ENCODE measurements at regions of chr3 and their contacts with region 1.

Region 1: DNA sequence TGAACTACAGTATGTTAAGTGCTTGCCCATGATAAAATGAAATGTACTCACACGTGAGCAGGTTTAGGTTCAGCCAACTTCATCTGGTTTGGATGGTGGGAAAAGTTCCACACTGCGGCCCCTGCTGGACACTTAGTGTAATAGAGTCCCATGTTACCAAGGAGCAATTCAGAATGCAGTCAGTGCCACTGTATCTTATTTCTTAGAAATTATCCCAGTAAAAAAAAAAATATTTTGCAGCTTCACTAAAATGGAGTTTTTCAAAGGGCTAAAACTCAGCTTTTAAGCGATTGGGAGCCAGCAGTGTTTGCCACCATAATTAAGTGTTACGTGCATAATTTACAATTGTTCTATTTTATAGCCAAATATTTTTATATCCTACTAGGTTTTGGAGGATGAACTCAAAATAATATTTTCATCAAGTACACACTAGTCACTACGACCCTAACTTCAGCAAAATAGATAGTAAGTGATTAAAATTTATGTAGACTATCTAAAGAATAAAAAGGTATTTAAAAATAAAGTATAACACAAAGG is 371.7 kb upstream of the GBE1 start:
- DNase-seq: peak in 4 of 5 donors; percentile 20 to 26 (median 24)
- H3K4me3 ChIP-seq: no peak overlapping the region
- H3K4me3 Mint-ChIP-seq: no peak overlapping the region
- H3K27ac ChIP-seq: no peak overlapping the region
- H3K27ac Mint-ChIP-seq: no peak overlapping the region
- H3K4me1 ChIP-seq: no peaks in the 10 kb centered on the region
- H3K4me1 Mint-ChIP-seq: peaks cover 0 to 2% (median 0%) of the 10 kb centered on the region in 4 donors
- H3K27me3 ChIP-seq: no peaks in the 10 kb centered on the region
- H3K27me3 Mint-ChIP-seq: peaks cover 0 to 1% of the 10 kb centered on the region in 2 donors

Region 2: DNA sequence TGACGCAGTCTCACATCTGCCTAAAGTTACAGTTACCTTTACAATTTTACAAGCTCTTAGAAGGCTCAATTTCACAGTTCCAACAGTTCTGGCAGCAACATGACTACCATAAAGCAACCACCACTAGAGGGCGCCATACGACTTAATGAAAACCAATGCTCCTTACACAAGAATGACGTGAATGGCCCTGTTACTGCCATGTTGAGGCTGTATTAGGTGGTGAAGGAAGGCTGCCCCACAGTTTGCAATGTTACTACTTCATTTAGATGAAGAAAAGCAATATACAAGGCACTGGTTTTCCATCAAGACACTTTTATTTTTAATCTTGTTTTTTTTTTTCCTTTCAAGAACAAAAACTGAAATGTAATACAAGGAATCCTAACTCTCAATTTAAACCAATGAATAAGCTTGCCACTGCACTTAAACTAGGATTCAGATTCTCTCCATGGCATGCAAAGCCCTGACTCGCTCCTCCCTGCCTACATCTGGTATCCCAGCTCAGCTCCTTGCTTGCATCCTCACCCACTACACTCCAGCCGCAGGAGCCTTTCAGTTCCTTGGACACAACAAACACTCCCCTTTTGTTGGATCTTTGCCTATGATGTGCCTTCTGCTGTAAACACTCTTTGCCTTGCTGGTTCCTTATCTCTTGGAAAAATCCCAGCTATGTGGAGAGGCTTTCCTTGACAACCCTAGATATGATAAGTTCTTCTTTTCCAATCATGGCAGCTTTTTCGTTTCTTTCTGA is 642.4 kb before region 1 on chr3:
- CTCF ChIA-PET with region 1: interaction called, 39 read pairs
- POLR2A ChIA-PET with region 1: no interaction called
- intact Hi-C with region 1: no loop called
- DNase-seq: peak; percentile 49 to 62 (median 56)
- H3K4me3 ChIP-seq: no peak overlapping the region
- H3K4me3 Mint-ChIP-seq: no peak overlapping the region
- H3K27ac ChIP-seq: no peak overlapping the region
- H3K27ac Mint-ChIP-seq: peak overlapping the region in 1 of 7 donors; percentile 0
- H3K4me1 ChIP-seq: no peaks in the 10 kb centered on the region
- H3K4me1 Mint-ChIP-seq: peaks cover 0 to 5% (median 2%) of the 10 kb centered on the region in 4 donors
- H3K27me3 ChIP-seq: no peaks in the 10 kb centered on the region
- H3K27me3 Mint-ChIP-seq: no peaks in the 10 kb centered on the region

Region 3: GRCh38 chr3:81581966-81582599 is 551.1 kb before region 1 on chr3:
- CTCF ChIA-PET with region 1: no interaction called
- POLR2A ChIA-PET with region 1: no interaction called
- intact Hi-C with region 1: loop called (anchors 1 kb)
- DNase-seq: peak in 1 of 5 donors; percentile 1
- H3K4me3 ChIP-seq: no peak overlapping the region
- H3K4me3 Mint-ChIP-seq: no peak overlapping the region
- H3K27ac ChIP-seq: no peak overlapping the region
- H3K27ac Mint-ChIP-seq: no peak overlapping the region
- H3K4me1 ChIP-seq: no peaks in the 10 kb centered on the region
- H3K4me1 Mint-ChIP-seq: no peaks in the 10 kb centered on the region
- H3K27me3 ChIP-seq: no peaks in the 10 kb centered on the region
- H3K27me3 Mint-ChIP-seq: no peaks in the 10 kb centered on the region

Region 4: GRCh38 chr3:81666493-81667121 is 466.5 kb before region 1 on chr3:
- CTCF ChIA-PET with region 1: interaction called, 10 read pairs
- POLR2A ChIA-PET with region 1: no interaction called
- intact Hi-C with region 1: no loop called
- DNase-seq: peak in 2 of 5 donors; percentile 3 to 8
- H3K4me3 ChIP-seq: no peak overlapping the region
- H3K4me3 Mint-ChIP-seq: no peak overlapping the region
- H3K27ac ChIP-seq: no peak overlapping the region
- H3K27ac Mint-ChIP-seq: no peak overlapping the region
- H3K4me1 ChIP-seq: no peaks in the 10 kb centered on the region
- H3K4me1 Mint-ChIP-seq: no peaks in the 10 kb centered on the region
- H3K27me3 ChIP-seq: no peaks in the 10 kb centered on the region
- H3K27me3 Mint-ChIP-seq: no peaks in the 10 kb centered on the region